ENCODE measurements at regions of chr16 and their contacts with region 1.

Region 1: DNA sequence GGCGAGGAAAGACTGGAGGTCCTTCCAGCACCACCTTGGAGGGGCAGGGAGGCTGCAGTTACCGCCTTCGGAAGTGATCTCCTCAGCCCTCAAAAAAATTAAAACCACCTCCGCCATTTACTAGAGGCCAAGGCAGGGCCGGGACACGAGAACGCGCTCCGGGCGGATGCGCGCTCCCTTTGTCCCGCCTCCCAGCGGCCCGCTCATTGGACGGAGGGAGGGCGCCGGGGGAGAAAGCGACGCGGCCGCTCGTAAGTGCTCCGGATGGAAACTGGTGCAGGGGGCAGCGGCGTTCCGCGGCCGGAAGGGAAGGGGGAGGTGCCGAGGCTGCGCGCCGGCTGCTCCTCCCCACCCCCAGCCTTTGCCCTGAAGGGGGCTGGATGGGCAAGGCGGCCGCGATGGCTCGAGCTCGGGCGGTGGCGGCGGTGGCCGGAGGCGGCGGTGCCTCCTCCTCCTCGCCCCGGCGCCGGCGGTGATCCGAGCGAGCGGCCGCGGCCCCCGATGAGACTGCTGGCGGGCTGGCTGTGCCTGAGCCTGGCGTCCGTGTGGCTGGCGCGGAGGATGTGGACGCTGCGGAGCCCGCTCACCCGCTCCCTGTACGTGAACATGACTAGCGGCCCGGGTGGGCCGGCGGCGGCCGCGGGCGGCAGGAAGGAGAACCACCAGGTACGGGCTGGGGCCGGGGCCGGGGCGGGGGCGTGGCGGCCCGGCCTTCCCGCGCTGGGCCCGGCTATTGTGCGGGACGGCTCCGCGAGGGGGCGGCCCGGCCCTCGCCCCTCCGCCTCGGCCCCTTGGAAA is at the start of gene METTL9:
- DNase-seq: peak; percentile 99
- total RNA-seq, gene METTL9: 59.6 to 62.0 TPM

Region 2: DNA sequence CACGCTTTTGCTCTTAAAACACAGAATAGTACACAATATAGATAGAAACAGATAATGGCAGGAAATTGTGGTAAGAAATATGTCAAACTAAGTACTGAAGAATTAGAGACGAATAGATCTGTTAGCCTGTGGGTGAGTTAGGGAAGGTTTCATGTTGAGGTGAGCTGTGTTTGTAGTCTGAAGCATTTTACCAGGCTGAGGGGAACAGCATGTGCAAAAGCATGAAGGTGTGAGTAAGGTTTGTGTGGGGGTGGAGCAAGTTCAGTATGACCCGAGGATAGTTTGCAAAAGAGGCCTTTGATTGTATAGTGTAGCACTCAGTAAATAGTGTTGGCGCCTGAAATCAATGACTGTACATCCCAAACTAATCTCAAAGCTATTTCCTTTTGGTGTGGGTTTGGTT is 39.1 kb after region 1 on chr16:
- intact Hi-C with region 1: loop called in 1 of 2 experiments (anchors 5 kb)
- DNase-seq: no peak

Measured in posterior vena cava (tissue), 2 donors.